IMR-90 (cell line): ENCODE measurements at regions of chr15 and their contacts with region 1.

Region 1: GRCh38 chr15:20356444-20356910 is 185.1 kb downstream of the GOLGA6L6 start:
- DNase-seq: no peak
- ATAC-seq: peak; percentile 52; the same call in 1 of the 2 replicates
- H3K4me3 ChIP-seq: no peak overlapping the region
- H3K27ac ChIP-seq: no peak overlapping the region
- H3K4me1 ChIP-seq: no peaks in the 10 kb centered on the region
- H3K27me3 ChIP-seq: no peaks in the 10 kb centered on the region
- CTCF ChIP-seq: peak; percentile 56
- POLR2A ChIP-seq: no peak
- RAD21 ChIP-seq: peak; percentile 60

Region 2: GRCh38 chr15:19899021-19899824 is 457.3 kb before region 1 on chr15:
- CTCF ChIA-PET with region 1: no interaction called
- POLR2A ChIA-PET with region 1: no interaction called
- dilution Hi-C with region 1: no loop called
- in situ Hi-C with region 1: no loop called
- intact Hi-C with region 1: no loop called
- DNase-seq: no peak
- ATAC-seq: no peak
- H3K4me3 ChIP-seq: no peak overlapping the region
- H3K27ac ChIP-seq: no peak overlapping the region
- H3K4me1 ChIP-seq: no peaks in the 10 kb centered on the region
- H3K27me3 ChIP-seq: no peaks in the 10 kb centered on the region
- CTCF ChIP-seq: no peak
- POLR2A ChIP-seq: no peak
- RAD21 ChIP-seq: no peak

Region 3: GRCh38 chr15:20340931-20341661 is 15.4 kb before region 1 on chr15:
- CTCF ChIA-PET with region 1: no interaction called
- POLR2A ChIA-PET with region 1: no interaction called
- dilution Hi-C with region 1: no loop called
- in situ Hi-C with region 1: no loop called
- intact Hi-C with region 1: no loop called
- DNase-seq: no peak
- ATAC-seq: no peak
- H3K4me3 ChIP-seq: no peak overlapping the region
- H3K27ac ChIP-seq: no peak overlapping the region
- H3K4me1 ChIP-seq: no peaks in the 10 kb centered on the region
- H3K27me3 ChIP-seq: no peaks in the 10 kb centered on the region
- CTCF ChIP-seq: no peak
- POLR2A ChIP-seq: no peak
- RAD21 ChIP-seq: no peak

Region 4: DNA sequence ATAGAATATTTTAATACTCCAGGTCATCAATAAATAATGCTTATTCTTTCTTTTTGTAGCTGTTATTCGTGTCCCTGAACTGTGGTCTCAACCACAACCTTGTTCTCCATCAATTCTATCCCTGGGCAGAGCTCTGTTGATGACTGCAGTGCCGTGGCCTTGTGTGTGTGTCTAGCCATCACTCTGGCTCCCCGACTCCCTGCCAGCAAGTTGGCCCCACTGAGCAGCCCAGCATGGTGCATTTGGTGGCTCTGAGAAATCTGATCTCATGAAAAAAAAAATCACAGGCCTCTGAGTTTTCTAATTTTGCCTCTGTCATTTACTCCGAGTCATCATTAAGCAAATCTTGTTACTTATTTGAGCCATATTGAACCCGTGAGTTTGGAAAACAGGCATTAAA is 20.4 kb after region 1 on chr15:
- CTCF ChIA-PET with region 1: no interaction called
- POLR2A ChIA-PET with region 1: no interaction called
- dilution Hi-C with region 1: no loop called
- in situ Hi-C with region 1: no loop called
- intact Hi-C with region 1: loop called (anchors 2 kb)
- DNase-seq: no peak
- ATAC-seq: no peak
- H3K4me3 ChIP-seq: no peak overlapping the region
- H3K27ac ChIP-seq: no peak overlapping the region
- H3K4me1 ChIP-seq: no peaks in the 10 kb centered on the region
- H3K27me3 ChIP-seq: no peaks in the 10 kb centered on the region
- CTCF ChIP-seq: no peak
- POLR2A ChIP-seq: no peak
- RAD21 ChIP-seq: no peak